ENCODE measurements at regions of chr2 and their contacts with region 1.

Region 1: DNA sequence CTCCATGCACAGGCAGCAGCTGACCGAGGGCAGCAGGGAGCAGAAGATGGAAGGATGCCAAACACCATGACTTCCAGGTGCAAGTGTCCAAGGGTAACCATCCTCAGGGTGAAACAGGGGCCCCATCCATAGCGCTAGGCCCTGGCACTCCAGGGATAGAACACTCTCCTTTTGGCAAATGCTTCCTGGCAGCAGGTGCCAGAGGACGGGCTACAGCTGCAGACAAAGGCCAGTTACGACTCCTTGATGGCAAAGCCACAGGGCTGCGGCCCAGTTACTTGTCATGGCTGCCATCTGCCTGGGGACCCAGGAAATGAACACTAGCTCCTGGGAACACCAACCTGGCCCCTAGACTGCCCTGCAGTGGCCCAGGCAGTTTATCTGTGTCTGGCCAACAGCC is 178.8 kb downstream of the TMEM163 start:
- DNase-seq: no peak
- ATAC-seq: peak in 6 of 8 donors; percentile 21 to 47 (median 30)
- H3K4me3 ChIP-seq: no peak overlapping the region
- H3K27ac ChIP-seq: no peak overlapping the region
- H3K4me1 ChIP-seq: no peaks in the 10 kb centered on the region
- H3K27me3 ChIP-seq: peaks cover 0 to 2% (median 0%) of the 10 kb centered on the region in 7 donors
- CTCF ChIP-seq: no peak

Region 2: GRCh38 chr2:134466141-134466540 is 73.8 kb before region 1 on chr2:
- intact Hi-C with region 1: loop called in 1 of 10 experiments (anchors 2 kb)
- DNase-seq: no peak
- ATAC-seq: no peak
- H3K4me3 ChIP-seq: no peak overlapping the region
- H3K27ac ChIP-seq: no peak overlapping the region
- H3K4me1 ChIP-seq: peaks cover 0 to 6% (median 0%) of the 10 kb centered on the region in 9 donors
- H3K27me3 ChIP-seq: no peaks in the 10 kb centered on the region
- CTCF ChIP-seq: peak in 8 of 9 donors; percentile 7 to 47 (median 35)

Region 3: DNA sequence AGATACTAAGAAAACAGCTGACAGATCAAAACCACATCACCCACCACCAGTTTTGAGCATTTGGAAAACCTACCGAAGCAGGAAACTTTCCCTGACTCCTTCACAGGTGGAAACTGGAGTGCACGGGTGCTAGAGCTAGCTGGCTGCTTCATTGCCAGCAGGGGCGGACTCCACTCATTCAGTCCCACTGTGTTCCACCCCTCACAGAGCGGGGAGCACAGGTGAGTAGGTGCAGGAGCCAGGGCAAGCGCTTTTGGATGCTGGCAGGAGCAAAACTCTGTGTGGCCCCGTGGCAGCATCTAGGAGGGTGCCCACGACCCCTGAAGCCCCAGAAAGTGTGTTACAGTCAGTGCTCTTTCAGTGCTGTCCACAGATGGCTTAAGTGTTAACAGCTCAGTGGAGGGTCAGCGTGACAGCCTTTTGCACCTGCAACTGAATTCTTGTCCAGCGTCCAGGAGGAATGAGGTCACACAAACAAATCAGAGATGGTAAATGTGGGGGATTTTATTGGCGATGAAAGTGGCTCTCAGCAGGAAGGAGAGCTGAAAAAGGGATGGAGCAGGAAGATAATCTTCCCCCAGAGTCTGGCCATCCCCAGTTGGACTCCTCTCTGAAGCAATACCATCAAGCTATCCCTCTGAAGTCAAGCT is 107.8 kb after region 1 on chr2:
- intact Hi-C with region 1: no loop called
- DNase-seq: no peak
- ATAC-seq: no peak
- H3K4me3 ChIP-seq: no peak overlapping the region
- H3K27ac ChIP-seq: no peak overlapping the region
- H3K4me1 ChIP-seq: no peaks in the 10 kb centered on the region
- H3K27me3 ChIP-seq: no peaks in the 10 kb centered on the region
- CTCF ChIP-seq: no peak